Activated T-helper 1 cell treated with anti-CD3 and anti-CD28 coated beads, Interleukin-12 subunit alpha, Interleukin-12 subunit beta, Interleukin-2, Interleukin-4 antibody, amounts not matched to agents 30 ng/mL and 10 ng/mL and 1 ng/mL, durations not matched to agents 14 hours and 24 hours and 36 hours (primary cell): ENCODE measurements at regions of chr3 and their contacts with region 1.

Region 1: GRCh38 chr3:184543843-184544512 is 17.6 kb upstream of the EPHB3 start:
- DNase-seq: peak; percentile 68
- H3K4me3 Mint-ChIP-seq: no peak overlapping the region
- H3K27ac Mint-ChIP-seq: no peak overlapping the region
- H3K4me1 Mint-ChIP-seq: no peaks in the 10 kb centered on the region
- H3K27me3 Mint-ChIP-seq: peaks cover 17% of the 10 kb centered on the region

Region 2: GRCh38 chr3:183895296-183895695 is 648.7 kb before region 1 on chr3:
- intact Hi-C with region 1: loop called (anchors 2 kb)
- DNase-seq: no peak
- H3K4me3 Mint-ChIP-seq: no peak overlapping the region
- H3K27ac Mint-ChIP-seq: no peak overlapping the region
- H3K4me1 Mint-ChIP-seq: peaks cover 6% of the 10 kb centered on the region
- H3K27me3 Mint-ChIP-seq: peaks cover 8% of the 10 kb centered on the region

Region 3: GRCh38 chr3:184196536-184196935 is 347.4 kb before region 1 on chr3:
- intact Hi-C with region 1: no loop called
- DNase-seq: no peak
- H3K4me3 Mint-ChIP-seq: no peak overlapping the region
- H3K27ac Mint-ChIP-seq: no peak overlapping the region
- H3K4me1 Mint-ChIP-seq: no peaks in the 10 kb centered on the region
- H3K27me3 Mint-ChIP-seq: no peaks in the 10 kb centered on the region

Region 4: DNA sequence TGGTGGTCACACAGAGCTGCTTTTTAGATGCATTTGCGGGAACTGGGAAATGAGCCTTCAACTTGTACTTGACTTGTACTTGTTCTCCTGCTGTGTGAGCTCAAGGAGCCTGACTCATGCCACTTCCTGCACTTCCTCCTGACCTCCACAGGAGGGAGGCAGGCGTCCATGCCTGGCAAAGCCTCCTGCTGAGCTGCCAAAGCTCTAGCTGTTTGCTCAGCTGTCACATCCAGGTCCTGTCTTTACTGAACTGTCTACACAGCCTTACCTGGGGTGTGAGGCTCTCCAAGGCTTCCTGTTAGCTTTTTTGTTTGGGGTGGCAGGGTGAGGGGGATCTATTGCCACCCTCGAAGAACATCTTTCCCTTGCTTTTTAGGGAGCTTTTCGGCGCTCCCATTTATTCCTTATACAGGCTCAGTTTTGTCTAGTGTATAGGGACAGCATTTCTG is 172.4 kb before region 1 on chr3:
- intact Hi-C with region 1: loop called (anchors 1 kb)
- DNase-seq: peak; percentile 44
- H3K4me3 Mint-ChIP-seq: no peak overlapping the region
- H3K27ac Mint-ChIP-seq: no peak overlapping the region
- H3K4me1 Mint-ChIP-seq: peaks cover 11% of the 10 kb centered on the region
- H3K27me3 Mint-ChIP-seq: peaks cover 20% of the 10 kb centered on the region

Region 5: DNA sequence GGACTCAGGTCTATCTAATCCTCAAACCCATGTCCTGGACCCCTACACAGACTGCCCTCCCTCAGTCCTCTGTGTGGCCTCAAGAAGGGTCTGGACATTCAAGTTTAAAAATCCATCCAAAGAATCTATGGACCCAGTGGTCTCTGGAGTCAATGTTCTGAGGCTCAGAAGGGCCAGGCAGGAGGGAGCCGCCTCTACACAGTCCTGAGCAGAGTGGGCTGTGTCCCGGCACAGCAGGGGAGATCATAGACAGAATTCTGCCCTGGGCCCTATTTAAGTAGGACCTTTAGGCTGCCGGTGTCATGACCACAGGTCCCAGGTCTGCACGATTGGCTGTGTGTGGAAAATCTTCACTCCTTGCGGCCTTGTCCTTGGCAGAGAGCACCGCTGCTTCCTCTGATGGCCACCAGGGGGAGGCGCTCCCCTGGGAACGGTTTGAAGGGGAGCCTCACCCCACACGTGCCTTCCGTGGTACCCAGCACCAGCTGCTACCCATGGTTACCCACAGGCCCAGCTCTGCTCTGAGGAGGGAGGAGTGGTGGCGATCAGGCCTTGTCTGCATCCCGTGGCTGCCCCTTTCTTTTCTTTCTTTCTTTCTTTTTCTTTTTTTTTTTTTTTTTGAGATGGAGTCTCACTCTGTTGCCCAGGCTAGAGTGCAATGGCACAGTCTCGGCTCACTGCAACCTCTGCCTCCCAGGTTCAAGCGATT is 126.2 kb before region 1 on chr3:
- intact Hi-C with region 1: loop called (anchors 1 kb)
- DNase-seq: peak; percentile 43
- H3K4me3 Mint-ChIP-seq: no peak overlapping the region
- H3K27ac Mint-ChIP-seq: no peak overlapping the region
- H3K4me1 Mint-ChIP-seq: no peaks in the 10 kb centered on the region
- H3K27me3 Mint-ChIP-seq: peaks cover 5% of the 10 kb centered on the region

Region 6: DNA sequence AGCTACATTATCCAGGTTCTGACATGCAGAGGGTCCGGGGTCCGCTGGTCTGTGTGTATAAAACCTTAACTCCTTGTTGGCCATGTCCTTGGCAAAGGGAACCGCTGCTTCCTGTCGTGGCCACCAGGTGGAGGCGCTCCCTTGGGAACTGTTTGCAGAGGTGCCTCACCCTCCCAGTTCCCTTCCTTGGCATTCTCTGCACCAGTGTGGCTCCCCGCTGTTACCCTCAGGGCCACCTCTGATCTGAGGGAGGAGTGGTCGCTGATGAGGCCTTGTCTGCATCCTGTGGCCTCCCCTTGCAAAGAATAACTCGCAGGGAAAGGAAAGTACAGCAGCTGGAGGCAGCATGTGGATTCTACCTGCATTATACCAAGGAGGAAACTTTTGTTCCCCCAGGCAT is 74.6 kb before region 1 on chr3:
- intact Hi-C with region 1: loop called (anchors 1 kb)
- DNase-seq: no peak
- H3K4me3 Mint-ChIP-seq: no peak overlapping the region
- H3K27ac Mint-ChIP-seq: no peak overlapping the region
- H3K4me1 Mint-ChIP-seq: peaks cover 4% of the 10 kb centered on the region
- H3K27me3 Mint-ChIP-seq: peaks cover 24% of the 10 kb centered on the region

Region 7: DNA sequence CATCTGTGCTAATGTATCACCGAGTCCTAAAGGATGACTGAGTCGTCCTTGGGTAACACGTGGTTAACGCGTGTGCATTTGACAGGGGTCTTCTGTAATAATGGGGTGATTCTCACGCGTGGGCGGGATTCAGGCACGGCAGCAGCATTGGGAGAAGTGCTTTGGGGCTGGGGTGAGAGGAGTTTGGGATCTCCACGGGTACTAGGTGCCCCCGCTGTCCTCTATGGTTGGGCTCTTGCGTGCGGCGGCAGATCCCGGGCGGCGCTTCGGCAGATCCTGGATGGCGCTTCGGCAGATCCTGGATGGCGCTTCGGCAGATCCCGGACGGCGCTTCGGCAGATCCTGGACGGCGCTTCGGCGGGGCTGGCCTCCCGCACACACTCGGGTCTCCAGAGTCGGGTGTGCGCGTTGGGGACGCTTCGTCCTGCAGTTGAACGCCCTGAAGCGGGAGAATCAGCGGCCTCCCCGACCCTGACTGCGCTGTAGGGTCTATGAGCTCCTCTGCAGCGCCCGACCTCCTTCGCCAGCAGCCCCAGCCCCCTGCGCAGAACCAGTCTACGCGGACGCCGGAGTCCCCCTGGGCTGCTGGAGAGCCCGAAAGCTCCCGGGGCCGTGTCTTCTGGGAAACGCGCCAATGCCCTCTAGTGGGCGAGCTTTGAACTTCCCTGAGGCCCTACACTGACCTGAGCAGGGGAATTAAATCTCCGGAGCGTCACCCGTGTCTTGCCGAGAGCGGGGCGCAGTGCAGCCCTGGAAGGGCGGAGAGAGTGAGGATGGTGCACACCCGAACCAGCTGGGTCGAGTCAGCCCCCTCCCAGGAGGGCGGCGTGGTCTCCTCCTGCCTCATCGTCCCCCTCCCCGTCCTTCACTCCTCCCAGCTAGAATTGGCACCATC is 30.5 kb before region 1 on chr3:
- intact Hi-C with region 1: loop called (anchors 1 kb)
- DNase-seq: peak; percentile 76
- H3K4me3 Mint-ChIP-seq: peak overlapping the region; percentile 51
- H3K27ac Mint-ChIP-seq: no peak overlapping the region
- H3K4me1 Mint-ChIP-seq: peaks cover 7% of the 10 kb centered on the region
- H3K27me3 Mint-ChIP-seq: peaks cover 72% of the 10 kb centered on the region

Region 8: DNA sequence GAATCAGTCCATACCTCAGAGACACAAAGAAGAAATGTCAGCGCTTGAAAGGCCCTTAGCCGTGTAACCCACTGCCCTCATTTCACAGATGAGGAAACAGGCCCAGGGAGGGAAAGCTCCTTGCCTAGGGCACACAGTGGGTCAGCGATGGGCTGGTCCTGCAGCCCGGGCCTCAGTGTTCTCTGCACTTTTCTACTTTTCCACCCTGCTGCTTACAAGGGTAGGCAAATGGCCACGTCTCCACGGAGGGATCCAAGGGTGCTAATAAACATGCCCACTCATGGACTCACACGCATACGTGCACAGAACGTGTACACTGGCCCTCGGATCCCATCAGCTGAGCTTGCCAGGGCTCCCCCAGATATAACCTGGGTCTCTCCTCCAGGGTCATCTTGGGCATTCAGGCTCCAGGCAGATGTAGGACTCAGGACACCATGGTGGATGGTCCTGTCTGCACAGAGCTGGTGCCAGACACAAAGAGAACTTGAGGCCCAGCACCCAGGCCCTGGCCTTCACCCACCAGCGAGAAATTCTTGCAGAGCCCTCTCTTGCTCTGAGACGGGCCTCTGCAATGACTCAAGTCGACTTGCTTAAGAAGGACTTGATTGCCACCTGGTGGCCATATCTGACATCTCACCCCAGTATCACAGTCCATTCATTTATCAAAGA is 233.5 kb after region 1 on chr3:
- intact Hi-C with region 1: loop called (anchors 1 kb)
- DNase-seq: peak; percentile 69
- H3K4me3 Mint-ChIP-seq: no peak overlapping the region
- H3K27ac Mint-ChIP-seq: no peak overlapping the region
- H3K4me1 Mint-ChIP-seq: no peaks in the 10 kb centered on the region
- H3K27me3 Mint-ChIP-seq: peaks cover 17% of the 10 kb centered on the region